Activated B cell treated with CpG ODN at 0.5 μM for 24 hours (primary cell): ENCODE measurements at regions of chr7 and their contacts with region 1.

Region 1: GRCh38 chr7:101058355-101058754 is 26.9 kb upstream of the TRIM56 start:
- DNase-seq: peak; percentile 43
- ATAC-seq: no peak
- H3K4me3 Mint-ChIP-seq: no peak overlapping the region
- H3K27ac Mint-ChIP-seq: no peak overlapping the region
- H3K4me1 Mint-ChIP-seq: no peaks in the 10 kb centered on the region
- H3K27me3 Mint-ChIP-seq: peaks cover 32% of the 10 kb centered on the region
- CTCF ChIP-seq: no peak

Region 2: DNA sequence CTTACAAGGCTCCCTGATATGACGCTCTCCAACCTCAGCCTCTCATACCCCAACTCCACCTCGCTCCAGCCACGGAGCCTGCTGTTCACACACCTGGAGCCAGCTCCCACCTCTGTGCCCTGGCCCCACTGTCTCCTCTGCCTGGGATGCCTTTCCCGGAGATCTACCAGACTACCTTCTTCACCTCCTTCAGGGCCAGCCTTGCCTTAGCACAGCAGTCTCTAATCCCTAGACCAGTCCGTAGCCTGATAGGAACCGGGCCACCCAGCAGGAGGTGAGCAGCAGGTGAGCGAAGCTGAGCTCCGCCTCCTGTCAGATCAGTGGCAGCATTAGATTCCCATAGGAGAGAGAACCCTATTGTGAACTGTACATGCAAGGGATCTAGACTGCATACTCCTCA is 1891.3 kb before region 1 on chr7:
- CTCF ChIA-PET with region 1: no interaction called
- POLR2A ChIA-PET with region 1: interaction called, 10 read pairs
- intact Hi-C with region 1: no loop called
- DNase-seq: no peak
- ATAC-seq: no peak
- H3K4me3 Mint-ChIP-seq: no peak overlapping the region
- H3K27ac Mint-ChIP-seq: no peak overlapping the region
- H3K4me1 Mint-ChIP-seq: peaks cover 3% of the 10 kb centered on the region
- H3K27me3 Mint-ChIP-seq: peaks cover 13% of the 10 kb centered on the region
- CTCF ChIP-seq: no peak

Region 3: GRCh38 chr7:100611974-100612729 is 446.2 kb before region 1 on chr7 and contains the start of gene MOSPD3:
- CTCF ChIA-PET with region 1: no interaction called
- POLR2A ChIA-PET with region 1: no interaction called
- intact Hi-C with region 1: loop called (anchors 5 kb)
- DNase-seq: peak; percentile 99
- ATAC-seq: peak; percentile 91
- H3K4me3 Mint-ChIP-seq: peak within 1 kb of the TSS; percentile 99
- H3K27ac Mint-ChIP-seq: peak within 1 kb of the TSS; percentile 100
- H3K4me1 Mint-ChIP-seq: peaks cover 19% of the 10 kb centered on the region
- H3K27me3 Mint-ChIP-seq: no peaks in the 10 kb centered on the region
- CTCF ChIP-seq: no peak
- total RNA-seq, gene MOSPD3: 10.5 and 11.9 TPM in 2 replicates

Region 4: GRCh38 chr7:100896732-100897608 is 161.4 kb before region 1 on chr7:
- CTCF ChIA-PET with region 1: interaction called, 24 read pairs
- POLR2A ChIA-PET with region 1: interaction called, 3 read pairs
- intact Hi-C with region 1: loop called (anchors 1 kb)
- DNase-seq: peak; percentile 67
- ATAC-seq: peak; percentile 63
- H3K4me3 Mint-ChIP-seq: peak overlapping the region; percentile 84
- H3K27ac Mint-ChIP-seq: no peak overlapping the region
- H3K4me1 Mint-ChIP-seq: peaks cover 10% of the 10 kb centered on the region
- H3K27me3 Mint-ChIP-seq: peaks cover 35% of the 10 kb centered on the region
- CTCF ChIP-seq: no peak

Region 5: GRCh38 chr7:100965723-100966541 is 92.4 kb before region 1 on chr7:
- CTCF ChIA-PET with region 1: no interaction called
- POLR2A ChIA-PET with region 1: no interaction called
- intact Hi-C with region 1: loop called (anchors 1 kb)
- DNase-seq: peak; percentile 53
- ATAC-seq: peak; percentile 64
- H3K4me3 Mint-ChIP-seq: peak overlapping the region; percentile 68
- H3K27ac Mint-ChIP-seq: no peak overlapping the region
- H3K4me1 Mint-ChIP-seq: peaks cover 17% of the 10 kb centered on the region
- H3K27me3 Mint-ChIP-seq: peaks cover 59% of the 10 kb centered on the region
- CTCF ChIP-seq: no peak